Activated naive CD4-positive, alpha-beta T cell treated with anti-CD3 and anti-CD28 coated beads, Interleukin-2, amount 10 ng/mL, durations not matched to agents 7 days and 5 days (primary cell): ENCODE measurements at regions of chr14 and their contacts with region 1.

Region 1: GRCh38 chr14:24289649-24290249 is 9.8 kb downstream of the DHRS1 start:
- DNase-seq: peak; percentile 60
- H3K4me3 Mint-ChIP-seq: no peak overlapping the region
- H3K27ac Mint-ChIP-seq: no peak overlapping the region
- H3K4me1 Mint-ChIP-seq: peaks cover 21% of the 10 kb centered on the region
- H3K27me3 Mint-ChIP-seq: no peaks in the 10 kb centered on the region

Region 2: DNA sequence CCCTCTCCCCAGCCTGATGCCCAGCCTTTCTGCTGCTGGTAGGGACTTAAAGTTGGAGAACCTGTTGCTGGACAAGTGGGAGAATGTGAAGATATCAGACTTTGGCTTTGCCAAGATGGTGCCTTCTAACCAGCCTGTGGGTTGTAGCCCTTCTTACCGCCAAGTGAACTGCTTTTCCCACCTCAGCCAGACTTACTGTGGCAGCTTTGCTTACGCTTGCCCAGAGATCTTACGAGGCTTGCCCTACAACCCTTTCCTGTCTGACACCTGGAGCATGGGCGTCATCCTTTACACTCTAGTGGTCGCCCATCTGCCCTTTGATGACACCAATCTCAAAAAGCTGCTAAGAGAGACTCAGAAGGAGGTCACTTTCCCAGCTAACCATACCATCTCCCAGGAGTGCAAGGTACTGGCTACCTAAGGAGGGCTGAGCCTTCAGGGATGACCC is 82.6 kb before region 1 on chr14:
- CTCF ChIA-PET with region 1: no interaction called
- DNase-seq: no peak
- H3K4me3 Mint-ChIP-seq: no peak overlapping the region
- H3K27ac Mint-ChIP-seq: peak overlapping the region; percentile 58
- H3K4me1 Mint-ChIP-seq: peaks cover 34% of the 10 kb centered on the region
- H3K27me3 Mint-ChIP-seq: no peaks in the 10 kb centered on the region

Region 3: GRCh38 chr14:24279301-24280186 is 10.2 kb before region 1 on chr14:
- CTCF ChIA-PET with region 1: interaction called, 17 read pairs
- DNase-seq: peak; percentile 55
- H3K4me3 Mint-ChIP-seq: no peak overlapping the region
- H3K27ac Mint-ChIP-seq: no peak overlapping the region
- H3K4me1 Mint-ChIP-seq: peaks cover 37% of the 10 kb centered on the region
- H3K27me3 Mint-ChIP-seq: peaks cover 13% of the 10 kb centered on the region